Calu3 (cell line): ENCODE measurements at regions of chr15 and their contacts with region 1.

Region 1: DNA sequence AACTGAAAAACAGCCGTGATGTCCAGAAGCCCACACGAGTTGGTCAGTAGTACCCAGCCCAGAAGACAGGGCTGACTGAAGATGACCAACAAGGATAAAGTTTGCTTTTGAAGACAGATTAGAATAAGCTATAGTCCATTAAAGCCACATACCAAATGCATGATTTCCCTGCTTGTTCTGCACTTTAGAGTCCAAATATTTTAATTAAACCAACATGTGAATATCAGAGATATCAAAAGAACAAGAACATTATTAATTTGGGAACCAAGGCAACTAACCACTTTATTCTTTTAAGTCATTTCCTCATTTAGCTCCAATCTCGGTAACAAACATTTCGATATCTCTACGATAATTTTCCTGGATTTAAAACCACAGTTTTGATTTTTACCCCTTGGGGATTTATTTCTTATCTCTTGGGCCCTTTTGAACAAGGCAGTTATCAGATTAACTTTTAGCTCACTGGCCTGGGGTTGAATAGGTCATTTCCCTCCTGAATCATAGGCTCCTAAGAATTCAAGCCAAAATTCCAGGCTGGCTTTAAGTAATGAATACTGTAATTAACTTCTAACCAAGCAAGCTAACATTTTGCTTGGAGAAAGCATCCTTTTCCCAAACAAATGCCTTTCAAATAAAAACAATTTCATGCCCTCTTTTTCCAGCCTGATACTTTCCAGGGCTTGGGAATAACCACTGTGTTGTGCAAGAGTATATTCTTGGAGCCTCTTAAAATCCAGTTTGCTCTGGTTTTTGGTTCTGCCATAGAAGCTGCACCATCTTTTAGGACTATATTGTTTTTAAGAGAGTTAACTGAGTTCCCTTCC is 102.9 kb upstream of the NR2E3 start:
- DNase-seq: no peak
- H3K4me3 Mint-ChIP-seq: no peak overlapping the region
- H3K27ac Mint-ChIP-seq: no peak overlapping the region
- H3K4me1 Mint-ChIP-seq: peaks cover 28% of the 10 kb centered on the region
- H3K27me3 Mint-ChIP-seq: peaks cover 17% of the 10 kb centered on the region
- CTCF ChIP-seq: no peak

Region 2: GRCh38 chr15:72616491-72617210 is 909.2 kb after region 1 on chr15:
- CTCF ChIA-PET with region 1: interaction called, 12 read pairs
- intact Hi-C with region 1: no loop called
- DNase-seq: no peak
- H3K4me3 Mint-ChIP-seq: no peak overlapping the region
- H3K27ac Mint-ChIP-seq: no peak overlapping the region
- H3K4me1 Mint-ChIP-seq: no peaks in the 10 kb centered on the region
- H3K27me3 Mint-ChIP-seq: no peaks in the 10 kb centered on the region
- CTCF ChIP-seq: no peak